Head of caudate nucleus (tissue), 42 donors: ENCODE measurements at regions of chr7 and their contacts with region 1.

Region 1: GRCh38 chr7:123865517-123866117 is 20.6 kb downstream of the HYAL4 start:
- DNase-seq: peak in 25 of 42 donors; percentile 15 to 79 (median 52)

Region 2: DNA sequence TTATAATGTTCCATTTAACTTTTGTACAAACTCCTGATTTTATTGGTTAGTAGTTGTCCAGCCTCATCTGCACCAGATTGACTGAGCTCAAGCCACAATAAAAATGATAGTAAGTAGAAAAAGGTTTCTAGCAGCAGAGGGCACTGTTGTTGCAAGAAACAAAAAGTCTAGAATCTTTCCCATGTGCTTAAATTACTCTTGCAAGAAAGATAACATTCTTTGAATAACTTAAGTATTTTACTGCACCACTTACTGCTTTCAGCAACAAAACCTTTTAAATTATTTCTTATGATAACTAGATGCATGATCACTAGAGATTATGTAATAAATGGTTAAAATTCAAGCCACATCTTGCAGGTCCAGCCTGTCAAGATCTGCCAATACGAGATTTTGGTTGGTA is 182.9 kb before region 1 on chr7:
- intact Hi-C with region 1: loop called (anchors 5 kb)
- DNase-seq: peak in 7 of 42 donors; percentile 8 to 56 (median 19)

Region 3: DNA sequence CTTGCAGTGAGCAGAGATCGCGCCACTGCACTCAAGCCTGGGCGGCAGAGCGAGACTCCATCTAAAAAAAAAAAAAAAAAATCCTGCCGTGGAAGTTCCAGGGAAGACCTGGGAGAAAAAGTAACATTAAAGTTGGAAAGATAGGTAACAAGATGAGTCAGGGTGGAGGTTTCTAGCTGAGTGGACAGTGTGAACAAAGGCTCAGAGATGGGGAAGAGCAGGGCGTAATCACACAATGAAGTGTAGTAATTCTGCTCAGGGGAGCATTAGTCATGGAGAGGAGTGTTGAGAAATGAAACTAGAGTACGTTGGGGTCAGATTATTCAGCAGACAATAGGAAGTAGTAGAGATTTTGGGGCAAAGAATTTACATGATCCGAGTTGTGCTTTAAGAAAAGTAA is 95.2 kb before region 1 on chr7:
- intact Hi-C with region 1: no loop called
- DNase-seq: no peak